Left ventricle myocardium inferior (tissue), 1 donor: ENCODE measurements at regions of chr12 and their contacts with region 1.

Region 1: DNA sequence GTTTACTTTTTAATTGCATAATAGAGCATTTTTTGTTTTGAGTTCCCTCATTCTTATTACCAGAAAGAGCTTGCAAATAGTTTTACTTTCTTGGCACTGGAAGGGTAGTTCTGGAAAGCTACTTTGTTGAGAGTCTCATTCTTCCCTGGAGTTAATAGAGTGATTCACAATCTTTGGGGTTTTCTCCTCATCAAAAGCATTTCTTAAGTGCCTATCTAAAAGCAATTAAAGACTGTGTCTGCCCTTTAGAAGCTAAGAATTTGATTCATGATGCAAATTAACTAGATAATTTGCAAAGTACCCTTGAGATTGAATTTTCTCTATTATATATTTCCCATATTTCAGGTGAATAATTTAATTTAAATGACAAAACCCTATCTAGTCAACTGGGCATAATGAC is 8.1 kb upstream of the BMAL2 start:
- DNase-seq: no peak
- H3K4me3 ChIP-seq: no peak overlapping the region
- H3K27ac ChIP-seq: no peak overlapping the region
- H3K4me1 ChIP-seq: no peaks in the 10 kb centered on the region
- H3K27me3 ChIP-seq: no peaks in the 10 kb centered on the region
- CTCF ChIP-seq: no peak

Region 2: DNA sequence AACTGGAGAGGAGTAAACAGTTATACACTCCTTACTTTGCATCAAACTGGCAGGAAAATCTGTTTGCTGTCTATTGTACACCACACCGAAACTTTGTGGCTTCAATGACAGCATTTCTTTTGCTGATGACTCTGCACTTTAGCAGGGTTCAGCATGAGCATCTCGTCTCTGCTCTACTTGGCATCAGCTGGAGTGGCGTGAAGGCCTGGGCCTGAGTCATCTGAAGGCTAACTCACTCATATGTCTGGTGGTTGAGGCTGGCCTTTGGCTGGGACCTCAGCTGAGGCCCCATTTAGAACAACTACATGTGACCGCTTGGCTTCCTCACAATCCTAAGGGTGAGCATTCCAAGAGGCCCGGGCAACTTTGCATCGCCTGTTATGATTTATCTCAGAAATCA is 343.0 kb after region 1 on chr12:
- intact Hi-C with region 1: loop called (anchors 10 kb)
- DNase-seq: no peak
- H3K4me3 ChIP-seq: no peak overlapping the region
- H3K27ac ChIP-seq: peak overlapping the region; percentile 37
- H3K4me1 ChIP-seq: peaks cover 13% of the 10 kb centered on the region
- H3K27me3 ChIP-seq: no peaks in the 10 kb centered on the region
- CTCF ChIP-seq: no peak